Right cardiac atrium (tissue), 5 donors: ENCODE measurements at regions of chr14 and their contacts with region 1.

Region 1: GRCh38 chr14:20682435-20683124 is 1.8 kb upstream of the RNASE4 start:
- DNase-seq: peak; percentile 93 to 96 (median 95)
- ATAC-seq: peak; percentile 93 to 94
- H3K4me3 ChIP-seq: peak overlapping the region; percentile 81
- H3K27ac ChIP-seq: peak overlapping the region; percentile 99
- H3K4me1 ChIP-seq: peaks cover 6% of the 10 kb centered on the region
- H3K27me3 ChIP-seq: no peaks in the 10 kb centered on the region

Region 2: DNA sequence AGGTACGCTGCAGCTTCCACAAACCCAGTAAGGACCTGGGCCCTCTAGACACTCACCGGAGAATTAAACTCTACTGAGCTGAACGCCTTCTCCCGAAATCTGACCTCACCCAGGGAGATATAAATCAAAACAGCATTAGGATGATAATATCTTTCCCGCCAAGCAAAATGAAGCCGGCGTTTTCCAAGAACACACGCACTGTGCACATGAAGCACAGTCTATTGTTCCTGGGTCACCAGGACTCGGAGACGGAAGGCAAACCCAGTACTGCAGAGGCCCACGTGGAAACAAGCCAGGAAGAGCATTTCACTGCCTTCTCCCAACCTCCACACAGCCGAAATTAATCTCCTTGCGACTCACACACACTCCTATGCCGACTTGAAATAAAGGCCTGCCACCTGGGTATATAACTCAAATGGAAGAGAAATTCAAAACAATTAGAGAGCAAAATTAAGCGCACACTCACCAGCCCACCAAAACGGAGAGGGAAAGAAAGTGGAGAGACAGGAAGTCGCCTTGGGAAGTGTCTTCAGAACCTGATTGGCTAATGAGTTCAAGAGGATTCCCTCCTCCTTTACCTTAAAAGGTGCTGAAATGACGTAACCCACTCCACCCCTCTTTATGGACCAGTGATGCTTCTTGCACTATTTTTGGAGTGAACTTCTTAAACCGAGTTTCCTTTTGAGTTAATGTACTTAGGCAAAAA is 349.6 kb before region 1 on chr14 and contains the start of gene CCNB1IP1:
- intact Hi-C with region 1: loop called in 1 of 4 experiments (anchors 5 kb)
- DNase-seq: peak; percentile 46 to 71 (median 56)
- ATAC-seq: peak; percentile 99
- H3K4me3 ChIP-seq: peak within 1 kb of the TSS; percentile 91
- H3K27ac ChIP-seq: peak within 1 kb of the TSS; percentile 96
- H3K4me1 ChIP-seq: no peaks in the 10 kb centered on the region
- H3K27me3 ChIP-seq: no peaks in the 10 kb centered on the region
- total RNA-seq, gene CCNB1IP1: 41.0 to 58.2 (median 49.5) TPM

Region 3: DNA sequence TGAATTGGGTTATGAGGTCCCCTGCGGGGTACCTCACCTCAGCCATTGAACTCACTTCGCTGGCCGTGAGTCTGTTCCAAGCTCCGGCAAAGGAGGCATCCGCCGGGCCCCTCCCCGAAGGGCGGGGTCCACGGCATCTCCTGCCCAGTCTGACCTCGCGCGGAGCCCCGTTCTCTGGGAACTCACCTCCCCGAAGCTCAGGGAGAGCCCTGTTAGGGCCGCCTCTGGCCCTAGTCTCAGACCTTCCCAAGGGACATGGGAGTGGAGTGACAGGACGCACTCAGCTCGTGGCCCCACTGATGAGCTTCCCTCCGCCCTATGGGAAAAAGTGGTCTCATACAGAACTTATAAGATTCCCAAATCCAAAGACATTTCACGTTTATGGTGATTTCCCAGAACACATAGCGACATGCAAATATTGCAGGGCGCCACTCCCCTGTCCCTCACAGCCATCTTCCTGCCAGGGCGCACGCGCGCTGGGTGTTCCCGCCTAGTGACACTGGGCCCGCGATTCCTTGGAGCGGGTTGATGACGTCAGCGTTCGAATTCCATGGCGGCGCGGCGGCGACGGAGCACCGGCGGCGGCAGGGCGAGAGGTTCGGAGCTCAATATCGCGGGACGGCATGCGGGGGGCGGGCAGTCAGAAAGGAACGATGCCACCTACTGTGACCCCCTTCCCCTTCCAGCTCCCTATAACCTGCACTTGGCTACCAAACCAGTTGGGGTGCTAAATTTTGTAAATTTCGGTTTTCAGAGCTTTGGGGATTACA is 339.3 kb before region 1 on chr14 and contains the start of gene PARP2:
- intact Hi-C with region 1: loop called in 2 of 4 experiments (anchors 5 kb)
- DNase-seq: peak; percentile 98 to 99 (median 99)
- ATAC-seq: peak; percentile 99
- H3K4me3 ChIP-seq: peak within 1 kb of the TSS; percentile 99
- H3K27ac ChIP-seq: peak within 1 kb of the TSS; percentile 79
- H3K4me1 ChIP-seq: no peaks in the 10 kb centered on the region
- H3K27me3 ChIP-seq: no peaks in the 10 kb centered on the region
- total RNA-seq, gene PARP2: 11.9 to 17.9 (median 16.3) TPM

Region 4: DNA sequence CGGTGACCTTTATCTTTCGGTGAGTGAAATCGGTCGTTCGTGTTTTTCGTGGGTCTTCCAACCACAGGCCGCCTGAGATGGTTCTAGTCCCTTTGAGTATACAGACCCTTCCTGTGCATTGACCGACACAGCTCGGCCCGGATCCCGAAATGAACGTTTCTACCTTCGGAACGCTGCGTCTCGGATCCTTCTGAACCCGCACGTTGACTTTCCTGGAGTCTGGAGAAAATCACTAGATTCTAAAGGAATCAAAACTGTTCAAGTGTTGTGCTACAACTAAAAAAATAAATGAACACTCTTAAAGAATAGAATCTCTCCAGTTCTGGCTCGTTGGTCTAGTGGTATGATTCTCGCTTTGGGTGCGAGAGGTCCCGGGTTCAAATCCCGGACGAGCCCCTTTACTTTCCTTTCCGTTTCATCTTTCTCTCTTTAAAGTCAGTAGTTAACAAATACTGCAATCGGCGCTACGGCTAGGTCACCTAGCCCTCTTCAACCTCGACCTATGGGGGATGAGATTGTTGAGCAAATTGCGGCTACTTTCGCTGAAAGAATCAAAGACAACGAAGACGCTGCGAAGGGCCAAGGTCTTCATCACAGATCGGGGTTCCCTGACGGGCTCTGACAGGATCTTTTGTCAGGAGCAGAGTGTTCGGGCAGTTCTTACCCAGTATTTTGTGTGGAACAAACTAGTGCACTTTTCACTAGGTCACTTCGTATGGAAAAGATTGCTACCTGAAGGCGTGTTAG is 49.7 kb before region 1 on chr14:
- intact Hi-C with region 1: loop called in 1 of 4 experiments (anchors 5 kb)
- DNase-seq: peak in 1 of 3 donors; percentile 43
- ATAC-seq: peak; percentile 71 to 86
- H3K4me3 ChIP-seq: peak overlapping the region; percentile 31
- H3K27ac ChIP-seq: no peak overlapping the region
- H3K4me1 ChIP-seq: peaks cover 4% of the 10 kb centered on the region
- H3K27me3 ChIP-seq: no peaks in the 10 kb centered on the region